ENCODE measurements at regions of chr5 and their contacts with region 1.

Region 1: GRCh38 chr5:180860887-180861822 is at the start of gene ZFP62:
- DNase-seq: peak; percentile 63 to 92 (median 78)
- ATAC-seq: peak; percentile 81 to 91 (median 90)
- H3K4me3 ChIP-seq: peak within 1 kb of the TSS; percentile 86 to 96
- H3K4me3 Mint-ChIP-seq: peak within 1 kb of the TSS; percentile 91
- H3K27ac ChIP-seq: peak within 1 kb of the TSS; percentile 78
- H3K27ac Mint-ChIP-seq: peak within 1 kb of the TSS; percentile 92 to 93
- H3K4me1 ChIP-seq: peaks cover 6 to 10% of the 10 kb centered on the region in 2 experiments
- H3K4me1 Mint-ChIP-seq: peaks cover 21 to 32% (median 22%) of the 10 kb centered on the region in 3 donors
- H3K27me3 ChIP-seq: peaks cover 0 to 2% of the 10 kb centered on the region in 2 experiments
- H3K27me3 Mint-ChIP-seq: no peaks in the 10 kb centered on the region
- total RNA-seq, gene ZFP62: 26.9 to 61.7 (median 54.9) TPM

Region 2: GRCh38 chr5:180291943-180292831 is 569.0 kb before region 1 on chr5 and contains the start of gene MAPK9:
- CTCF ChIA-PET with region 1: no interaction called
- POLR2A ChIA-PET with region 1: interaction called in 1 of 2 experiments, 10 read pairs
- DNase-seq: peak; percentile 79 to 92 (median 86)
- ATAC-seq: peak; percentile 78 to 85 (median 84)
- H3K4me3 ChIP-seq: peak within 1 kb of the TSS; percentile 60 to 81
- H3K4me3 Mint-ChIP-seq: peak within 1 kb of the TSS; percentile 94 to 95 (median 95)
- H3K27ac ChIP-seq: peak within 1 kb of the TSS; percentile 87
- H3K27ac Mint-ChIP-seq: peak within 1 kb of the TSS; percentile 96
- H3K4me1 ChIP-seq: peaks cover 2 to 46% of the 10 kb centered on the region in 2 experiments
- H3K4me1 Mint-ChIP-seq: peaks cover 55 to 62% (median 57%) of the 10 kb centered on the region in 3 donors
- H3K27me3 ChIP-seq: no peaks in the 10 kb centered on the region
- H3K27me3 Mint-ChIP-seq: no peaks in the 10 kb centered on the region
- total RNA-seq, gene MAPK9: 28.3 to 35.8 (median 32.5) TPM

Region 3: DNA sequence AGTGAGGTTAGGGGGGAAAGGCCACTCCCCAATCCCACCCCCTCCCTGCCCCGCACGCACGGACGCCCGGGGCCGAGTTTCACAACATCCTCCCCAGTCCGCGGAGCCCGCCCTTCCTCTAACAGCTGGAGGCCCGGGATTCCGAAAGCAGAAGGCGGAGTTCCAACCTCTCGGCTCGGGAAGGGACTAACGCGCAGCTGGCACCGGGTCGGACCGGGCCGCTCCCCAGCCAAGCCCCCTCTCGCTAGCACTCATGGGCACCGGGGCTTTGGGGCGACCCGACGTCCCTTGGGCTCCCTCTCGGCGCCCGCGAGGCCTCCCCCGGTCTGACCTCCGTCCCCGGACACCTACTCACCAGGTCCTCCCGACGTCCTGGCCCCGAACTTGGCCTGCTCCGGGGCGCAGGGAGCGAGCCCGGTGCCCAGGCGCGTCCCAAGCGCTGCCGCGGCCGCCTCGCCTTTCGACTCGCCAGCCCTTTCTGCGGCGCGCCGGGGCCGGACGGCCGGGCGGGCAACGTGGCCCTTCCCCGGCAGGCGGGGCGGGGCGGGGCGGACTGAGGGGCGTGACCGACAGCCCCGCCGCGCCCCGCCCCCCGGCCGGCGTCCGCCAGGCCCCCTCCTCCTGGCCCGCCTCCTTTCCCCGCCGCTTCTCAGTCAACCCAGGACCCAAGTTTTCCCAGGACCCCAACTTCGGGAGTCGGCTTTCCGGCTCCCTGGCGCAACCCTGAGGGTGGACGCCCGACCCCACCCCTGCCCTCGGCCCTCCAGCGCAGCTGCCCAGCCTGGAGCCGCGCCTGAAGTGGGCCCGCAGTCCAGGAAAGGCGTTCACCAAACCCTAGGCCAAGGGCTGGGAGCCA is 58.6 kb before region 1 on chr5 and contains the start of gene MGAT1:
- CTCF ChIA-PET with region 1: interaction called in 1 of 2 experiments, 6 read pairs
- POLR2A ChIA-PET with region 1: interaction called, 6 to 12 read pairs
- DNase-seq: peak; percentile 18 to 85 (median 60)
- ATAC-seq: peak; percentile 62 to 71 (median 66)
- H3K4me3 ChIP-seq: peak within 1 kb of the TSS; percentile 90 to 94
- H3K4me3 Mint-ChIP-seq: peak within 1 kb of the TSS; percentile 83 to 95 (median 94)
- H3K27ac ChIP-seq: peak within 1 kb of the TSS; percentile 80
- H3K27ac Mint-ChIP-seq: peak within 1 kb of the TSS; percentile 99 to 100
- H3K4me1 ChIP-seq: peaks cover 57 to 86% of the 10 kb centered on the region in 2 experiments
- H3K4me1 Mint-ChIP-seq: peaks cover 81 to 83% (median 83%) of the 10 kb centered on the region in 3 donors
- H3K27me3 ChIP-seq: no peaks in the 10 kb centered on the region
- H3K27me3 Mint-ChIP-seq: no peaks in the 10 kb centered on the region
- total RNA-seq, gene MGAT1: 83.1 to 198 (median 145) TPM

Region 4: DNA sequence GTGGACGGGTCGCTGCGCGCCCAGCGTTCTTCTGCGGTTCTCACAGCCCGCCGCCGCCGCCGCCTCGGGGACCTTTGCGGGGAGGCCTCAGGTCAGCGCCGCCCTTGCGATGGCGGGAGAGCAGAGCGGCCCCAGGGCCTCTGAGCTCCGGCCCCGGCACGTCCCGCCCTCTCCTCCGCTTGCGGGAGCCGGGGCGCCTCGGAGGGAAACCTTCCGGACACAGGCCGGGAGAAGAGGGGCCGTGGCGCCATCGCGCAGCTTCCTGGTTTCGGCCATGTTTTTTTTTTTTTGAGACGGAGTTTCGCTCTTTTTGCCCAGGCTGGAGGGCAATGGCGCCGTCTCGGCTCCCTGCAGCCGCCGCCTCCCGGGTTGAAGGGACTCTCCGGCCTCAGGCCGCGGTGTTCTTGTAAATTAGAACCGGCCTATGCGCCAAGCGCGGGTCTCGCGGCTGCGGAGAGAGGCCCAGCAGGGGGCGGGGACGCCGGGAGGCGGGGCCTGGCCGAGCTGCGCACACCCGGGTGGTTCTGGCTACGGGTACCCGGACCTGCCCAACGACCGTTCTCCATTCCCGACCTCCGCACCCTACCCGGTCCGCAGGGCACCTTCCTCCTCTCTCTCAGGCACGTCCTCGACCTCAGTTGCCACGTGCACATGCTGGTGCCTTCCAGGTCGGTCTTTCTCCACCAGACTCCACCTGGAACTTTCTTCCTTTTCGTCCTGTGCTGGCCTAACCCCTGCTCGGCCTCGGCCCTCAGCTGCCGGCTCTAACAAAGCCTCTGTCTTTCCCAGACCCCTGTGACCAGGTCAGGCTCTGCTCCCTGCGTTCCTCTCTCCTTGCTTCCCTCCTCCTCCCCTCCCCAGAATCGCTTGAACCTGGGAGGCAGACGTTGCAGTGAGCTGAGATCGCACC is 29.8 kb before region 1 on chr5:
- CTCF ChIA-PET with region 1: interaction called in 1 of 2 experiments, 10 read pairs
- POLR2A ChIA-PET with region 1: interaction called, 9 to 10 read pairs
- DNase-seq: peak; percentile 36 to 80 (median 59)
- ATAC-seq: peak; percentile 60 to 77 (median 76)
- H3K4me3 ChIP-seq: peak overlapping the region; percentile 84 to 91
- H3K4me3 Mint-ChIP-seq: peak overlapping the region; percentile 94 to 97 (median 94)
- H3K27ac ChIP-seq: peak overlapping the region; percentile 93
- H3K27ac Mint-ChIP-seq: peak overlapping the region; percentile 99
- H3K4me1 ChIP-seq: peaks cover 15 to 46% of the 10 kb centered on the region in 2 experiments
- H3K4me1 Mint-ChIP-seq: peaks cover 54 to 60% (median 55%) of the 10 kb centered on the region in 3 donors
- H3K27me3 ChIP-seq: no peaks in the 10 kb centered on the region
- H3K27me3 Mint-ChIP-seq: no peaks in the 10 kb centered on the region

Region 5: DNA sequence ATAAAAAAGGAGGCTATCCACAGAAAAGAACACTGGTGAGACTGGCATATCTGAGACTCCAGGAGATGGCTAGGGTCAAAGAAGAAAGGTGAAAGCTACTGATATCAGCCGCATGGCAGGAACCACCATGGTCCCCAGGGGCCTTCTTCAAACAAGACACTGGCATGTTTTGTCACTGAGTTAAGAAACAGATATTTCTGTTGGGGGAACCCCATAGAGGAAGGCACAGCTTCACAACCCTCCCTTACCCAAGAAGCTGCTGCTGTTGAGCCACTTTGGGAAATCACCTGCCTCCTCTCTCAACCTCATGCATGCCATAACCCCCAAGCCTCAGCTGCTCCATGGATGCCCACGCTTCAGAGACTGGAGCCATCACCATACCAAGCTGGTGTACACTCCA is 114.2 kb after region 1 on chr5:
- CTCF ChIA-PET with region 1: no interaction called
- POLR2A ChIA-PET with region 1: no interaction called
- DNase-seq: peak in 2 of 35 experiments; percentile 4
- ATAC-seq: peak in 2 of 4 experiments; percentile 19 to 28
- H3K4me3 ChIP-seq: no peak overlapping the region
- H3K4me3 Mint-ChIP-seq: no peak overlapping the region
- H3K27ac ChIP-seq: no peak overlapping the region
- H3K27ac Mint-ChIP-seq: no peak overlapping the region
- H3K4me1 ChIP-seq: no peaks in the 10 kb centered on the region
- H3K4me1 Mint-ChIP-seq: peaks cover 7 to 22% (median 13%) of the 10 kb centered on the region in 3 donors
- H3K27me3 ChIP-seq: no peaks in the 10 kb centered on the region
- H3K27me3 Mint-ChIP-seq: peaks cover 0 to 2% of the 10 kb centered on the region in 2 donors

Region 6: DNA sequence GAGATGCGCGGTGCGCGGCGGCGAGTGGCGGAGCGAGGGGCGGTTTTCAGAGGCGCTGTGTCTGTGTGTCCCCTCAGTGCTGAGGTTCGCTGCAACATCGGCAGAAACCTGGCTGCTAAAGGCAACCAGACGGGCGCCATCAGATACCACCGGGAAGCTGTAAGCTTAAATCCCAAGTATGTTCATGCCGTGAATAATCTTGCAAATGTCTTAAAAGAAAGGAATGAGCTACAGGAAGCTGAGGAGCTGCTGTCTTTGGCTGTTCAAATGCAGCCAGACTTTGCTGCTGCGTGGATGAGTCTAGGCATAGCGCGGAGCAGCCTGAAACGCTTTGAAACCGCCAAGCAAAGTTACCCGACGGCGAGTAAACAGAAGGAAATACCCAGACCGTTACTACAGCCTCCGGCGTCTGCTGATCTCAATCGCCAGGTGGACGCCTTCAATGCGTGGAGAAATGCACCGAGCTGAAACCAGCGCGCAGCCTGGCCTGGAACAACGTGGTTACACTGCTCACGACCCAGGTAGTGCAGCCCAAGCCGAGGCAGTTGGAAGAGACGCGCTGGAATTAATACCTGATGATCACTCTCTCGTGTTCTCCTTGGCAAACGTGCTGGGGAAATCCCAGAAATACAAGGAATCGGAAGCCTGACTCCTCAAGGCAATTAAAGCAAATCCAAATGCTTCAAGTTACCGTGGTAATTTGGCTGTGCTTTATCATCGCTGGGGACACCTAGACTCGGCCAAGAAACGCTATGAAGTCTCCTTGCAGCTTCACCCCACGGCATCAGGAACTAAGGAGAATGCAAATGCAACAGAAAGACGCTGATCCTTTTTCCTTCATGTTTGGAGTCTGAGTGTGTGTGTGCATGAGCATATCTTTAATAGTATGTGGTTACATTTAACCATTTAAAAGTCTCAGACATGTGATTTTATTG is 254.0 kb after region 1 on chr5:
- CTCF ChIA-PET with region 1: no interaction called
- POLR2A ChIA-PET with region 1: no interaction called
- DNase-seq: no peak
- ATAC-seq: peak in 1 of 4 experiments; percentile 49
- H3K4me3 ChIP-seq: no peak overlapping the region
- H3K4me3 Mint-ChIP-seq: peak overlapping the region in 1 of 3 donors; percentile 37
- H3K27ac ChIP-seq: no peak overlapping the region
- H3K27ac Mint-ChIP-seq: no peak overlapping the region
- H3K4me1 ChIP-seq: peaks cover 0 to 5% of the 10 kb centered on the region in 2 experiments
- H3K4me1 Mint-ChIP-seq: peaks cover 1 to 14% (median 7%) of the 10 kb centered on the region in 3 donors
- H3K27me3 ChIP-seq: peaks cover 15 to 73% of the 10 kb centered on the region in 2 experiments
- H3K27me3 Mint-ChIP-seq: peaks cover 81 to 86% of the 10 kb centered on the region in 2 donors